PC-9 (cell line): ENCODE measurements at regions of chr12 and their contacts with region 1.

Region 1: DNA sequence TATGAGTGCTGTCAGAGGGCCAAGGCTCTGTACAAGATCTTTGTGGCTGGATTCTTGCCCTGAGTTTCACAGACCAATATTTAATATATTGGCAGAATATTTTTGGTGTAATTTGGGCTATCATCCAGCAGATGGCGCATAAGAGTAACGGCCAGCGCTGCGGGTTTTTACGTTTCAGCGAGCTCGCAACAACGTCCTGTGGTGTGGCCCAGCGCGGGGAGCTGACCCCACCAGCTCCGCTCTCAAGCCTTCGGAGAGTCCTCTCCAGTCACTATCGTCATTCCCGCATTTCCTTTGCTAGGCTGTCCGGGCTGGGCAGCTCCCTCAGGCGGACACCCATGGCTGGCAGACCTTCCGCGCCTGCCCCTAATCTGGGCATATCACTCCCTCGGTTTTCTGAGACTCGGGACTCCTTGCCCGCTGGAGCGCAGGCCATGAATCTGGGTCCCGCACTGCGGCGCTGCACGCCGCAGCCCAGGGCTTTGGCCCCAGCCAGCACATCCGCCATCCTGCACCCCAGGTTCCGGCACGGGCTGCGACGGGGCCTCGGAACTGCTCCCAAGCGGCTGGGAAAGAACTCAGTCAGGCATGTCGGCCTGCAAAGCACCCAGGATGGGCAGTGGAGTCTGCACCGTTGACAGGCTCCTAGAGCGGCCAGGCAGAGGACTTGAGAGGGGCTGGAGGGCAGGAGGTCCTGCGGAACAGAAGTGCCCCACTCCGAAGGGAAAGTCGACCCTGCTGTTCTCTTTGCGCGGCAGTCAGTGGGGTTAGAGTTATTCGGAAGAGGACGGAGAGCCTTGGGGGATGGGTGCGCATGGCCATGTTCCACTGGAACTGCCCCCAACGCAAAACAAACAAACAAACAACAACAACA is 18.4 kb downstream of the OLR1 start:
- DNase-seq: peak; percentile 48 to 76
- H3K4me3 ChIP-seq: peak overlapping the region; percentile 62
- H3K27ac ChIP-seq: no peak overlapping the region
- H3K4me1 ChIP-seq: no peaks in the 10 kb centered on the region
- H3K27me3 ChIP-seq: no peaks in the 10 kb centered on the region
- CTCF ChIP-seq: peak; percentile 95

Region 2: DNA sequence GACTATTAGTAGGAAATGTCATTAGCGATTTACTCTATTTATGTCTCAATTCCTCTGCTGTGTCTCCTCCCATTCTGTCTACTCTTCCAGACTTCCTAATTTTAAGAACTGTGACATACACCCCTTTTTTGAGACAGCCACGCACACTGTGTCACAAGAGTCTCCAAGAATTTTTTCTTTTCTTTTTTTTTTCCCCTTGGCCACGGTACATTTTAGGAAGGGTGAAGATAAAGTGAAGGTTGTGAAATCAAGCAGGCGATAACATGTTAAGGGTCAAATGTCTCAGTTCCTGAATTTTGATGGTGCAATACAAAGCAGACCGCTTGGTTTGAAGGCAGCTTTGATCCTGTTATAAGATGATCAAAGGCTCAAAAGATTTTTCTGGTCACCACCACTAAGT is 14.1 kb after region 1 on chr12:
- CTCF ChIA-PET with region 1: interaction called, 12 read pairs
- POLR2A ChIA-PET with region 1: interaction called, 11 read pairs
- intact Hi-C with region 1: no loop called
- DNase-seq: no peak
- H3K4me3 ChIP-seq: no peak overlapping the region
- H3K27ac ChIP-seq: no peak overlapping the region
- H3K4me1 ChIP-seq: peaks cover 36% of the 10 kb centered on the region
- H3K27me3 ChIP-seq: no peaks in the 10 kb centered on the region
- CTCF ChIP-seq: no peak

Region 3: DNA sequence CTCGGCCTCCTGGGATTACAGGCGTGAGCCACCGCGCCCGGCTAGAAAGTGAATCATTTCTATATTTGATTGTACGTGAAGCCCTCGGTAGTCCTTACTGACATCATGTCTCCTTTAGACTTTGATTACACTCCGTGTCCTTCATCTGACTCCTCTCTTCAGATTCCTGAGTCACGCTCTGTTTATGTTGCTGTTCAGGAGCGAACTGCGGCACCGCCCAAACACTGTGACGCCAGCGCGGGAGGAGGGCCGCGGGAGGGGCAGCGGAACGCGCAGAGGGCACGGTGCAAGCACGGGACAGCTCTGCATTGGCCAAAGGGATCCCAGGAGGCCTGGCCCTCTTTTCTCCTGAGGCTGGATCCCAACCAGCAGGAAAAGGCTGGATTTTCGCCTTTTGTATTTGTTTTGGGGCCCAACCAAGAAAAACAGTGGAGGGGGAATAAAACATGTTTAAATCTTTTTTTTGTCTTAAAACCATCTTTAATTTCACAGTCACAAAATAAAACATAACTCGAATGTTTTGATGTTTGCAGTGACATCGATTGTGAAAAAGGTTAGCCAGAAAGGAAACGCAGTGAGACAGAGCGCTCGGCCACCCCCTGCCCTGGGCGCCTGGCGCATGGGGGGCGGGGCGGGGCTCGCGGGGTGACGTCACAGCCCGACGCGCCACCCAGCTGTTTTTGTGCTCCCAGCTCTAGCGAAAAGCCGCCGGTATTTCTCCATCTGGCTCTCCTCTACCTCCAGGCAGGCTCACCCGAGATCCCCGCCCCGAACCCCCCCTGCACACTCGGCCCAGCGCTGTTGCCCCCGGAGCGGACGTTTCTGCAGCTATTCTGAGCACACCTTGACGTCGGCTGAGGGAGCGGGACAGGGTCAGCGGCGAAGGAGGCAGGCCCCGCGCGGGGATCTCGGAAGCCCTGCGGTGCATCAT is 59.0 kb after region 1 on chr12 and contains the start of gene GABARAPL1:
- CTCF ChIA-PET with region 1: interaction called, 8 read pairs
- POLR2A ChIA-PET with region 1: interaction called, 3 read pairs
- intact Hi-C with region 1: loop called (anchors 1 kb)
- DNase-seq: peak; percentile 99
- H3K4me3 ChIP-seq: peak within 1 kb of the TSS; percentile 85
- H3K27ac ChIP-seq: peak within 1 kb of the TSS; percentile 90
- H3K4me1 ChIP-seq: peaks cover 20% of the 10 kb centered on the region
- H3K27me3 ChIP-seq: no peaks in the 10 kb centered on the region
- CTCF ChIP-seq: no peak
- total RNA-seq, gene GABARAPL1: 85.6 and 143 TPM in 2 replicates

Region 4: GRCh38 chr12:10235761-10236631 is 82.5 kb after region 1 on chr12:
- CTCF ChIA-PET with region 1: interaction called, 5 read pairs
- POLR2A ChIA-PET with region 1: interaction called, 3 read pairs
- intact Hi-C with region 1: loop called (anchors 1 kb)
- DNase-seq: peak; percentile 32 to 43
- H3K4me3 ChIP-seq: no peak overlapping the region
- H3K27ac ChIP-seq: no peak overlapping the region
- H3K4me1 ChIP-seq: no peaks in the 10 kb centered on the region
- H3K27me3 ChIP-seq: no peaks in the 10 kb centered on the region
- CTCF ChIP-seq: peak; percentile 96

Region 5: DNA sequence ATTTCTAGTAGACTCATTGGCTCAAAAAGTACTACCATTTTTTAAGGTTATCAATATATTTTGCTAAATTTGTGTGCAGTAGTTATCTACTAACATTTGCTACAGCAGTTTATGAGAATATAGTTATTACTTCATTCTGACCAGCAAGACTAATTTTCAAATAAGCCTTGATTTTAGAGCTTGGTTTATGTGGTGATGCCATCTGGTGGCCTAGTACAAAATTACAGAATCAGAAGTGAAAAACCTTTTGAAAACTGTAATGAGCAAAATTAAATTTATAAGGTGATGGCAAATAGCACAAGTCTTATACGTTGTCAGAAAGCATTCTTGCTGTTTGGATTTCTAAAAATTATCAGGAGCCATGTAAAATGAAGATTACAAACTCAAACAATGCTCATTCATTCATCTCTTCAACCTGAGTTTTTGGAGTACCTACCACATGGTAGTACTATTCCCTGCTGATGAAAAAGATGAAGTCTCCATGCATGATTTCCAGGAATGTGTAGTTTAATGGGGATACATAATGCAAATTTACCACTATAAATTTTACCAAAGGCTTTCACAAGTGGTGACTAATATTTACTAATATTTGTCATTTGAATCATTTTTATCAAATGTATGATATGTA is 408.9 kb after region 1 on chr12:
- CTCF ChIA-PET with region 1: interaction called, 12 read pairs
- POLR2A ChIA-PET with region 1: no interaction called
- intact Hi-C with region 1: loop called (anchors 2 kb)
- DNase-seq: peak in 1 of 2 experiments; percentile 28
- H3K4me3 ChIP-seq: no peak overlapping the region
- H3K27ac ChIP-seq: no peak overlapping the region
- H3K4me1 ChIP-seq: no peaks in the 10 kb centered on the region
- H3K27me3 ChIP-seq: no peaks in the 10 kb centered on the region
- CTCF ChIP-seq: peak; percentile 87